ENCODE measurements at regions of chr9 and their contacts with region 1.

Region 1: DNA sequence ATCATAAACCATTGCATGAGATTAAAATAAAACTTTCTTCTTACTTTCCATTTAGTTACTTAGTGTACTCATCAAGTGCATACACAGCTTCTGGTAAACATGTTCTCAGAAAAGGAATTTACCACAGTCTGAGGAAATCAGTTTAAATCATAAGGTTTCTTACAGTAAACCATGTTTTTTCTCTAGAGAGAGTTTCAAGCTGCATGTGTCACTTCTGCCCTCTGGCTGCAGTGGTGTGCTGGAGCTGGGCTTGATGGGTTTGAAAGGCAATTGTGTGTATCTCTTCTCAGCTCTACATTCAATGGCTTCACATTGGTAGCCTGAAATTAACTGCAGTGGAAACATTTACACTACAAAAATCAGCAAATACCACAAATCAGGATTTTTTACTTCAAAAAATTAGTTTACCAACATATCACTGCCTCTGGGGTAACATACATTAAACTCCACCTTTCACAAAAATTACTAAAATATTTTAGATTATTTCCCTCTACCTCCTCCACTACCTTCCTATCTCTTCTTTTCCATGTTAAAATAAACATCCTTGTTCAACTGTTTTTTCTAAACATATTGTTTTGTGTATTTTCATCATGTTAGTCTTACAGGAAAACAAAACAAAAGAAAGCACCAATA is 414.3 kb downstream of the ANXA1 start:
- DNase-seq: peak in 9 of 10 donors; percentile 29 to 92 (median 60)

Region 2: DNA sequence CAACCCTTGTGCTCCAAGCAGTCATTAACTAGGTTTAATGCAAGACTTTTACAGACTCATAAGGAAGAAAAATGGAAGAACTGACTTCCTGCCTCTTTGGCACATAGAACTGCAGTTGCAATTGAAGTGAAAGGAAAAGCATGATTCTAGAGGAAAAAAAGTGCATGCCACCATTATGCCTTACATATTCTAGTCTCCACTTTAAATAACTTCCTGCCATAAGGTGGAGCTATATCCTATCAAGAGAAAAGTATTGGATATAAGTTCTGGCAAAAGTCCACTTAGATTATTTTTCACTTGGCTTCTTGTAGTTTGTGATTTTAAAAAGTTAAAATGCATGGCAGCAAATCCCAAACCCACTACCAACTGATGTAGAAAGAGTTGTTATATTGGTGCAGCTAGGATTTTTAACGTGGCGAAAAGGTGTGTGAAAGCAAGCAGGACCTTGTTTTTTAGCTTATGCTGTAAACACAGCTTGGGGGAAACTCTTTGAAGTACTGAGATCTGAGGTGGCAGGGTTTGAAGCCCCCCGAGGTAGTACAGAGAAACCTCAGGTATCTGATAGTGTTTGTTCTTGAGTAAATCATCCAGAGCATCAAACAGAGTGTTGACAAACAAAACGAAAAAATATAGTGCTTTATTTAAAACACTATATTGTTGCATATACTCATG is 296.4 kb before region 1 on chr9:
- intact Hi-C with region 1: loop called (anchors 10 kb)
- DNase-seq: no peak

Region 3: GRCh38 chr9:73380411-73380810 is 185.5 kb before region 1 on chr9:
- intact Hi-C with region 1: no loop called
- DNase-seq: peak in 1 of 10 donors; percentile 54

Region 4: GRCh38 chr9:73810585-73811215 is 244.8 kb after region 1 on chr9:
- intact Hi-C with region 1: no loop called
- DNase-seq: no peak

Measured in posterior cingulate gyrus (tissue), 11 donors.